ENCODE measurements at regions of chr2 and their contacts with region 1.

Region 1: DNA sequence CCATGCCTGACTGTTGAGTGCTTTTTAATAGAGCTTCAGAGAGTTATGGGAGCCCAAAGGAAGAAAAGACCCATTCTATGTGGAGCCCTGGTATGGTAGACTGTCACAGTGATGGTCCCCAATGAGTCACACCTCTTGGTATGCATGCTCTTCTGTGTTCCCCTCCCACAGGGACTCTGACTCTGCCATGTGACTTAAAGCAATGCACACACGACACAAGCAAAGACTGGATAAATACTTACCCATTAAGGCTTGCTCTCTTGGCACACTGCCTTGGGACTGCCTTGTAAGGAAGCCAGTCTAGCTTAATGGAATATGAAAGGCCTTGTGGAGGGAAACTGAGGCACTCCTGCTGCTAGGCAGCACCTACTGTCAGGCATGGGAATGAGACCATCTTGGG is 16.7 kb upstream of the DTNB start:
- DNase-seq: no peak
- ATAC-seq: no peak
- H3K4me3 ChIP-seq: no peak overlapping the region
- H3K27ac ChIP-seq: no peak overlapping the region
- H3K4me1 ChIP-seq: peaks cover 0 to 2% (median 0%) of the 10 kb centered on the region in 12 donors
- H3K27me3 ChIP-seq: no peaks in the 10 kb centered on the region
- CTCF ChIP-seq: no peak
- POLR2A ChIP-seq: no peak

Region 2: GRCh38 chr2:25618642-25619037 is 71.4 kb before region 1 on chr2:
- intact Hi-C with region 1: loop called in 1 of 10 experiments (anchors 10 kb)
- DNase-seq: no peak
- ATAC-seq: peak in 2 of 4 donors; percentile 49 to 65
- H3K4me3 ChIP-seq: no peak overlapping the region
- H3K27ac ChIP-seq: peak overlapping the region in 7 of 12 donors; percentile 24 to 77 (median 31)
- H3K4me1 ChIP-seq: peaks cover 0 to 25% (median 11%) of the 10 kb centered on the region in 12 donors
- H3K27me3 ChIP-seq: no peaks in the 10 kb centered on the region
- CTCF ChIP-seq: no peak
- POLR2A ChIP-seq: no peak

Measured in heart left ventricle (tissue), 16 donors.